ENCODE measurements at regions of chr9 and their contacts with region 1.

Region 1: DNA sequence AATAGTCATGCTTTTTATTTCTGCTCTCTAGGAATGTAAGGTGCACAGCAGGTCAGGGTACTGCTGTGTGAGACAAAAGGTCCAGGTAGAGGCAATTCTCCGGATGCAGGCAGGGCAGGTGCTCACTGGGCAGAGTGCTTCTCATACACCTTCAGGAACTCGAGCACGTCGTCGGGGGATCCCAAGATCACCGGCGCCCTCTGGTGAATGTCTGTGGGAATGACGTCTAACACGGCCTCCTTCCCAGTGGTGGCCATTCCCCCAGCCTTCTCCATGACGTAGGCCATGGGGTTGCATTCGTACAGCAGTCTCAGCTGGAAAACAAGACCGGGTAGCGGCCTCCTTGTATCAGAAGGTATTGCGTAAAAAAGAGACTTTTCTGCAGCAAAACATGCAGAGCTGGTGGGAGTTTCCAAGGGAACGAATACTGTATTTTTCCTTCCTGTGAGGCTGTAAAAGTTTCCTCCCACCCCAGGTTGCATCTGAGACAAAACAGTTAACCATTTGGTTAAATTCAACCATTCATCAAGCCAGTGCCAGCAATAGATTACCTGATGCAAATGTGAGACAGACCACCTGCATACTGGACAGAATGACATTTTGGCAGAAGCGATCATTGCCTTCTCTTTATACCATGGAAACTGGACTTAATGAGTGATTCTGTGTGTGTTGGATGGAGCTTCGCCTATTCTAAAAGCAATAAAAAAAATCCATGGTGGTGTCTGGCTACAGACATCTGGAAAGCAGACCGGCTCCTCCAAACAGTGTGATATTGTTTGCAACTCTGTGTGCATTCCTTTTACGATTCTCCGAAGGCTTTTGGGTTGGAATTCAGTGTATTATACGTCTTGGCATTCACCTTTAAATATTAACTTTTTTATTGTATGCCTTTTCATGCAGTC is 9.9 kb upstream of the FBP2 start:
- DNase-seq: peak; percentile 64 to 80
- ATAC-seq: peak; percentile 49 to 68 (median 64)
- H3K4me3 ChIP-seq: no peak overlapping the region
- H3K27ac ChIP-seq: no peak overlapping the region
- H3K4me1 ChIP-seq: peaks cover 5% of the 10 kb centered on the region
- H3K27me3 ChIP-seq: peaks cover 0 to 2% (median 0%) of the 10 kb centered on the region in 3 donors
- CTCF ChIP-seq: peak; percentile 71

Region 2: DNA sequence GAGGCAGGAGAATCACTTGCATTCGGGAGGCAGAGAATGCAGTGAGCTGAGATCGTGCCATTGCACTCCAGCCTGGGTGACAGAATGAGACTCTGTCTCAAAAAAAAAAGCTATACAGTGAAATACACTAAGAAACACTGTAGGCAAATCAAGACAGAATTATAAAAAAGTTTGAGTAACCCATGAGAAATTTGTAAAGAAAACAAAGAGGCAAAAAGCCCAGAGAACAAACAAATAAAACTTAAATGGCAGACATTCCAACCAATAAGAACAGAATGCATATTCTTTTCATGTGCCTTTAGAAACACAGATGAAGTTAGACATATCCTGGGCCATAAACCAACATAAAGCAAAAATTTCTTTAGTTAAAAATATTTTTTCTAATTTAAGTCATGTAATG is 313.8 kb before region 1 on chr9:
- intact Hi-C with region 1: loop called in 1 of 2 experiments (anchors 5 kb)
- DNase-seq: no peak
- ATAC-seq: no peak
- H3K4me3 ChIP-seq: no peak overlapping the region
- H3K27ac ChIP-seq: no peak overlapping the region
- H3K4me1 ChIP-seq: peaks cover 23% of the 10 kb centered on the region
- H3K27me3 ChIP-seq: no peaks in the 10 kb centered on the region
- CTCF ChIP-seq: no peak

Region 3: GRCh38 chr9:94534901-94535300 is 68.6 kb before region 1 on chr9:
- intact Hi-C with region 1: no loop called
- DNase-seq: no peak
- ATAC-seq: no peak
- H3K4me3 ChIP-seq: no peak overlapping the region
- H3K27ac ChIP-seq: no peak overlapping the region
- H3K4me1 ChIP-seq: no peaks in the 10 kb centered on the region
- H3K27me3 ChIP-seq: no peaks in the 10 kb centered on the region
- CTCF ChIP-seq: no peak

Region 4: GRCh38 chr9:94553029-94553938 is 50.2 kb before region 1 on chr9:
- intact Hi-C with region 1: loop called in 1 of 2 experiments (anchors 2 kb)
- DNase-seq: no peak
- ATAC-seq: no peak
- H3K4me3 ChIP-seq: no peak overlapping the region
- H3K27ac ChIP-seq: no peak overlapping the region
- H3K4me1 ChIP-seq: peaks cover 4% of the 10 kb centered on the region
- H3K27me3 ChIP-seq: no peaks in the 10 kb centered on the region
- CTCF ChIP-seq: no peak

Measured in psoas muscle (tissue), 8 donors.